CD14-positive monocyte (primary cell): ENCODE measurements at regions of chr14 and their contacts with region 1.

Region 1: DNA sequence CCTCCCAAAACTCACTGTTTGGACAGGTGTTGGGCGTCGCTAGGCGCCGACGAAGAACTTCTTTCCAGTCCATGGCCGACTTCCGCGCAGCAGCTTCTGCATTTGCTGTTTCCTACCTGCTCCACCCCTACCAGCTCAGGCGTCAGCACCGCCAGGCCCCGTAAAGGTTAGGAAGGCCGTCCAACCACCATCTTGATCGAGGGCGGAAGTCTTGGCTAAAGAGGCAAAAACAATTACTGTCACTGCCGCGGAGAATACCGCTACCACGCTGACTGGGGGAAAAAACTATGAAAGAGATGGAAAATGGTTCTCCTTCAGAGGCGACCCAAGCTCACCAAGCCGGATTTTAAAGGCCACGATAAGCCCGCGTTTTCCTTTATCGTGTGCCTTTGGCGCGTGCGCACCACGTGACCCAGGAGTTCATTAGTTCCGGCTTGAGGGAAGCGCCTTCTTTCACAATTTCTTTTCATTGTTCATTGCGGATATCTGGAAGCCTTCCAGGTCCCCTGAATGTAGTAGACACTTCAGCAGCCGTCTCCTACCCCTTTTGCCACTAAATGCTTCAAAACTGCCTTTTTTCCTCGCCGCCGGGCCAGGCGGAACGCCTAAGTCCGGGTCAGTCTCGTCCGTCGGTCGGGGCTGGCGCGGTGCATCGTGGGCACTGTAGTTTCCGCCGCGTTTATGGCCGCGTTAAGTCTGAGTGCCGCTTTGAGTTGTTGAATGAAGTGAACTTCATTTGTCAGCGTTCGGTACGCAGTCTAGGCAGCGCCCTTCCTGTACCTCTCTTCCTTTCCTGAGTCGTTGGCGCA is at the starts of genes PPP2R3C and PRORP:
- DNase-seq: peak; percentile 87 to 92 (median 87)
- H3K4me3 ChIP-seq: peak within 1 kb of the TSS; percentile 75 to 97 (median 96)
- H3K4me3 Mint-ChIP-seq: peak within 1 kb of the TSS; percentile 94 to 99
- H3K27ac ChIP-seq: peak within 1 kb of the TSS; percentile 86 to 99
- H3K27ac Mint-ChIP-seq: peak within 1 kb of the TSS; percentile 98 to 100 (median 100)
- H3K4me1 ChIP-seq: peaks cover 23 to 26% of the 10 kb centered on the region in 2 donors
- H3K4me1 Mint-ChIP-seq: peaks cover 56% of the 10 kb centered on the region
- H3K27me3 ChIP-seq: no peaks in the 10 kb centered on the region
- H3K27me3 Mint-ChIP-seq: peaks cover 0 to 2% (median 2%) of the 10 kb centered on the region in 3 donors
- CTCF ChIP-seq: no peak
- polyA plus RNA-seq, gene PPP2R3C: 21.4 to 131 (median 122) TPM
- polyA plus RNA-seq, gene PRORP: 10.7 to 22.2 (median 17.9) TPM

Region 2: DNA sequence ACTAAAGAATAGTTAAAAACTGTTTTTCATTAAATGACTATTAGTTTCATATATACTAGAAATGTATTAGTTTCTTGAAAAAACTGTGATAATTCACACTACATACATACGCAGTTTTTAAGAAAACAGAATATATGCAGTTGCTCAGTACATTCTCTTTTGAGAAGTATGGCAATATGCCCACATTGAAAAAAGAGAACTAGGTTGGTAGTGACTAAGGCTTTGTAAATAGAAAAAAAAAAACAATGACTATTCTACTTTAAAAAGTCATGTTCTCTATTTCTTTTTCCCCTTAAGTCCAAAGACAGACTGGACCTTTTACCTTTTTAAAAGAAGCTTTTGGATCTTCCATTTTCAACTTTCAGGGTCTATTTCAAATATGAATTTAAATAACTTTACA is 517.1 kb before region 1 on chr14:
- intact Hi-C with region 1: loop called in 1 of 2 experiments (anchors 10 kb)
- DNase-seq: peak; percentile 57 to 67 (median 60)
- H3K4me3 ChIP-seq: peak overlapping the region in 2 of 3 experiments; percentile 31 to 67
- H3K4me3 Mint-ChIP-seq: peak overlapping the region; percentile 67 to 86
- H3K27ac ChIP-seq: peak overlapping the region in 1 of 2 donors; percentile 92
- H3K27ac Mint-ChIP-seq: peak overlapping the region; percentile 97 to 98 (median 98)
- H3K4me1 ChIP-seq: peaks cover 18 to 28% of the 10 kb centered on the region in 2 donors
- H3K4me1 Mint-ChIP-seq: peaks cover 17% of the 10 kb centered on the region
- H3K27me3 ChIP-seq: no peaks in the 10 kb centered on the region
- H3K27me3 Mint-ChIP-seq: peaks cover 0 to 2% (median 0%) of the 10 kb centered on the region in 3 donors
- CTCF ChIP-seq: no peak

Region 3: DNA sequence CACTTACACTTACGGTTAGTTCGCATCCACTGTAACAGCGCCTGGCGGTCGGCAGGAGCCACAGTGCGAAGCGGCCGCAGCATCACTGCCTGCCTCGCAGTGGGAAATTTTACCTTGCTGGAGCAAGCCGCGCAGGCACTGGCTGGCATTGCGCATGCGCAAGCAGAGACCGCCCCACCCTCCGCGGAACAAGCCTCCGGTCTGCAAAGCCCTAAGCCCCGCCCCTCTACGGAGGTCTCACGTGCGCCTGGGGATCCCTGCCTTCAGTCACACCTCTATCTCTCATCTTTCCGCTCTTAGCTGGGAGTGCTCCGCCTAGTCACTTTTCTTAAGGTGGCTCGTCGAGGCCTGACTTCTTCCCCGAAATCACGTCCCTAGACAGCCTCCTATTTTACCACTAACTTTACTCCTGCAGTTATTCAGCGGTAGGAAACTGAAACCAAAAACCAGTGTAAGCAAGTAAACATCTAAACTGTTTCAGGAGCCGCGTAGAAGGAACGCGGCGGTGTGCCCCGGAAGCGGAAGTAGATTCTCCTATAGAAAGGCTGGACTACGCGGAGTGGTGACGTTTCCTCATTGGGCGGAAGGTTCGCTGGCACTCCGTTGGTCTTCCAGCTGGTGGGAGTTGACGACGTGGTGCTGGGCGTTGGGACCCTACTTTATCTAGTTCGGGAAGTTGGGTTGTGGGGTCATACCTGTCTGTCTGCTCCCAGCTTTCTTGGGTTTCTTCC is 139.5 kb before region 1 on chr14 and contains the start of gene SRP54:
- intact Hi-C with region 1: loop called (anchors 5 to 10 kb)
- DNase-seq: peak; percentile 99
- H3K4me3 ChIP-seq: peak within 1 kb of the TSS; percentile 61 to 90 (median 78)
- H3K4me3 Mint-ChIP-seq: no peak within 1 kb of the TSS
- H3K27ac ChIP-seq: peak within 1 kb of the TSS; percentile 95 to 96
- H3K27ac Mint-ChIP-seq: no peak within 1 kb of the TSS
- H3K4me1 ChIP-seq: peaks cover 29 to 39% of the 10 kb centered on the region in 2 donors
- H3K4me1 Mint-ChIP-seq: peaks cover 4% of the 10 kb centered on the region
- H3K27me3 ChIP-seq: no peaks in the 10 kb centered on the region
- H3K27me3 Mint-ChIP-seq: peaks cover 0 to 2% (median 0%) of the 10 kb centered on the region in 3 donors
- CTCF ChIP-seq: no peak
- polyA plus RNA-seq, gene SRP54: 24.9 to 33.6 (median 25.4) TPM

Region 4: GRCh38 chr14:35292051-35292769 is 170.1 kb after region 1 on chr14 and contains the start of gene PSMA6:
- intact Hi-C with region 1: loop called (anchors 5 to 10 kb)
- DNase-seq: peak; percentile 99 to 100 (median 99)
- H3K4me3 ChIP-seq: peak within 1 kb of the TSS; percentile 64 to 83 (median 71)
- H3K4me3 Mint-ChIP-seq: peak within 1 kb of the TSS; percentile 97 to 99
- H3K27ac ChIP-seq: peak within 1 kb of the TSS; percentile 88 to 89
- H3K27ac Mint-ChIP-seq: peak within 1 kb of the TSS; percentile 96 to 98 (median 97)
- H3K4me1 ChIP-seq: peaks cover 58 to 68% of the 10 kb centered on the region in 2 donors
- H3K4me1 Mint-ChIP-seq: peaks cover 52% of the 10 kb centered on the region
- H3K27me3 ChIP-seq: no peaks in the 10 kb centered on the region
- H3K27me3 Mint-ChIP-seq: peaks cover 0 to 3% (median 0%) of the 10 kb centered on the region in 3 donors
- CTCF ChIP-seq: no peak
- polyA plus RNA-seq, gene PSMA6: 144 to 572 (median 480) TPM

Region 5: GRCh38 chr14:35814371-35815005 is 692.4 kb after region 1 on chr14:
- intact Hi-C with region 1: loop called in 1 of 2 experiments (anchors 10 kb)
- DNase-seq: peak; percentile 46 to 67 (median 59)
- H3K4me3 ChIP-seq: no peak overlapping the region
- H3K4me3 Mint-ChIP-seq: no peak overlapping the region
- H3K27ac ChIP-seq: no peak overlapping the region
- H3K27ac Mint-ChIP-seq: no peak overlapping the region
- H3K4me1 ChIP-seq: no peaks in the 10 kb centered on the region
- H3K4me1 Mint-ChIP-seq: no peaks in the 10 kb centered on the region
- H3K27me3 ChIP-seq: no peaks in the 10 kb centered on the region
- H3K27me3 Mint-ChIP-seq: peaks cover 2 to 5% (median 4%) of the 10 kb centered on the region in 3 donors
- CTCF ChIP-seq: peak; percentile 83